Cardiac septum (tissue), 1 donor: ENCODE measurements at regions of chr10 and their contacts with region 1.

Region 1: GRCh38 chr10:68156373-68157185 is 47.3 kb downstream of the MYPN start:
- DNase-seq: no peak

Region 2: GRCh38 chr10:67858971-67859370 is 297.6 kb before region 1 on chr10:
- intact Hi-C with region 1: loop called (anchors 5 kb)
- DNase-seq: no peak

Region 3: GRCh38 chr10:68082872-68083271 is 73.7 kb before region 1 on chr10:
- intact Hi-C with region 1: loop called (anchors 2 kb)
- DNase-seq: no peak

Region 4: GRCh38 chr10:68110027-68110426 is 46.6 kb before region 1 on chr10:
- intact Hi-C with region 1: loop called (anchors 2 kb)
- DNase-seq: no peak